Adrenal gland (tissue), 19 donors: ENCODE measurements at regions of chr9 and their contacts with region 1.

Region 1: DNA sequence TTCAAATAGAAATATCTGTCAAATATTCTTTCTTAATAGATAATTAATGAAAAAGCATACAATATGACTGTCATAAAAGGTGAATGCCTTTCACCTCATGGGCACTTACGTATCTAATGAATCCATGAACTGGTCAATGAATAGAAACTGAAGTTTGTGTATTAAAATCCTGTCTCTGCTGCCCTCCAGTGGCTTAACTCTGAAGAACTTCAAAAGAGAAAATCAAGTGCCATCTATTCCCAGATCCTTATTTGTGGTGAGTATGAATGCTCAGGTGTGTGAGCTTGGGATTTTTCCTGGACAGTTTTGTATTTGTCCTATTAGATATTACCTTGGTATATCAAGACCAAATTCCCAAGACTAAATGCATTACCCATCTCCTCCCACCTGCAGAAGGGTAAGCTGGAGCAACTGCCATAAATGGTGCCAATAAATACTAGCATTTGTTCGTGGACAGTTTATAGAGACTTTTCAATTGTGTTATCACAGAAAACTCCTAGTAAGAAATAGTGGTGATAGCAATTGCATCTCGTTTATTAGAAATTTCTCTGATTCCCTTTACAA is 44.0 kb upstream of the SVEP1 start:
- DNase-seq: peak in 6 of 7 donors; percentile 23 to 60 (median 50)
- H3K4me3 ChIP-seq: no peak overlapping the region
- H3K27ac ChIP-seq: no peak overlapping the region
- H3K4me1 ChIP-seq: no peaks in the 10 kb centered on the region
- H3K27me3 ChIP-seq: no peaks in the 10 kb centered on the region
- CTCF ChIP-seq: peak; percentile 54 to 75 (median 69)
- POLR2A ChIP-seq: no peak

Region 2: GRCh38 chr9:110183208-110184145 is 440.1 kb before region 1 on chr9:
- intact Hi-C with region 1: loop called in 1 of 2 experiments (anchors 5 kb)
- DNase-seq: peak; percentile 63 to 86 (median 72)
- H3K4me3 ChIP-seq: no peak overlapping the region
- H3K27ac ChIP-seq: no peak overlapping the region
- H3K4me1 ChIP-seq: peaks cover 0 to 2% of the 10 kb centered on the region in 2 donors
- H3K27me3 ChIP-seq: no peaks in the 10 kb centered on the region
- CTCF ChIP-seq: peak; percentile 58 to 84 (median 75)
- POLR2A ChIP-seq: no peak

Region 3: DNA sequence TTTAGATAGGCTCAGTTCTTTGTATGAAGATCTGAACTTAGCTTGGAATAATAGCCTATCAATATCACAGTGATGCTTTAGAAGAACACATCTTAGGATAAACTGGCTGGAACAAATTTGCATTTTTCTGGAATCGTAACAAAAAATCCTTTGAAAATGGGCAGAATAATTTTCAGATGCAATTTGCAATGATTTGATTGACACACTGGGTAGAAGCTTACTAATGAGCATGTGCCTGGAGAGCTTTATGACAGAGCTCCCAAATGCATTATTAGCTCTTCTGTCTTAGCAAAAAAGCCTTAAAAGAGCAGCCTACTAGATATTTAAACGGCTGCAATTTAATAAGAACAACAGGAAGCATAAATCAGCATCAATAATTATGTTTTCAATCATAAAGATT is 209.1 kb before region 1 on chr9:
- intact Hi-C with region 1: no loop called
- DNase-seq: no peak
- H3K4me3 ChIP-seq: no peak overlapping the region
- H3K27ac ChIP-seq: no peak overlapping the region
- H3K4me1 ChIP-seq: no peaks in the 10 kb centered on the region
- H3K27me3 ChIP-seq: no peaks in the 10 kb centered on the region
- CTCF ChIP-seq: no peak
- POLR2A ChIP-seq: no peak

Region 4: DNA sequence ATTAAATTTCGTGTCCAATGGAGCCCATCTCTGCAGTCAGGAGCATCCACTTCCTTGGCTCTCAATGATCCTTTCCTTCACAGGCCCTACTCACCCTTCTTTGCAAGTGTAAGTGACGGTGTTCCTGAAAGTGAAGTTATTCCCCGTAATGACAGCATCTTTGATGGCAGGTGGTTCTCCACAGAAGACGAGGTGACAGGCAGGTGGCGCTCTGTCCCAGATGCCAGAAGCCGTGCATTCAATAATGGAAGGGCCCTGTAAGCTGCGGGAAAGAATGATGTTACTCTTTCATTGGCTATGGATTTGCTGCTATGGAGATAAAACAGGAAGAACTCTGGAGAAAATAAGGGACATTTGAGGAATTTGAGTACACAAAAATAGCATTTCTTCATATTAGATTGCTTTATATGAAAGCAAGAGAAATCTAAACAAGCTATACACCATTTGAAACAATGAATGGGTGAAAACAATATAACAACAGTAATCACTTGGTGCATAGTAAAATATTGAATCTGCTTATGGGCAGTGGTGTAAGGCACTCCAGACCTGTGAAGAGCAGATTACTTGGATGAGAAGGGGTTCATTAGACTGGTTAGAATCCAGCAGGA is 195.9 kb before region 1 on chr9:
- intact Hi-C with region 1: loop called in 1 of 2 experiments (anchors 5 kb)
- DNase-seq: peak; percentile 22 to 76 (median 58)
- H3K4me3 ChIP-seq: no peak overlapping the region
- H3K27ac ChIP-seq: no peak overlapping the region
- H3K4me1 ChIP-seq: no peaks in the 10 kb centered on the region
- H3K27me3 ChIP-seq: no peaks in the 10 kb centered on the region
- CTCF ChIP-seq: peak; percentile 42 to 58 (median 55)
- POLR2A ChIP-seq: no peak